HEK293 (cell line): ENCODE measurements at regions of chr6 and their contacts with region 1.

Region 1: DNA sequence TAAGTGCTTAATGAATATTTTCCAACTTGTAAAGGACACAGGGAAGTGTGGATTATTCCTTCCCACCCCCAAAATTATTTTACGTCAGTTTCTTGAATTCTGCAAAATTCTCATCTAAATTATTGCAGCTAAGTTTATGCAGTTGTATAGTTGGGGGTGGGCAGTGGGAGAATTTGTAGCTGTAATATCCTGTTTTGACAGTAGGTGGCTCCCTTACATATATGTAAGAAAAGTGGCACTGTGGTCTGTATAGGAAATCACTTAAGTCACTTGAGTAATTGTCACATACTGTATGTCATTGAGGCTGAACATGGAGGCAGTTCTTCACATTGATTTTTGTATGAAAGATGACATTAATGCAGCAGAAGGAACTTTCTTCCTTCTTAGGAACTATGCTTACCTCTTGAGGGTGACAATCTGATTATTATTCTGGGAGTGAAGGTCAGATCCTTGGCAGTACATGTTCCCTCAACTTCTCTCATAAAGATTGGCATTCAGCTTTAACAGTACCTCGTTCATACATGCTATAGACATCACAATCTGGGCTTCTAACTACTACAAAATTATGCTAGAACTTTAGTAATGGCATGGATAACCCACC is 14.7 kb upstream of the CFAP206 start:
- H3K4me3 ChIP-seq: no peak overlapping the region
- H3K27ac ChIP-seq: no peak overlapping the region
- H3K4me1 ChIP-seq: no peaks in the 10 kb centered on the region
- CTCF ChIP-seq: 0 out of 2 replicates have a peak, but pooled peaks have one; percentile 54

Region 2: GRCh38 chr6:87066449-87067333 is 326.4 kb before region 1 on chr6:
- CTCF ChIA-PET with region 1: interaction called, 16 read pairs
- POLR2A ChIA-PET with region 1: no interaction called
- H3K4me3 ChIP-seq: no peak overlapping the region
- H3K27ac ChIP-seq: no peak overlapping the region
- H3K4me1 ChIP-seq: no peaks in the 10 kb centered on the region
- CTCF ChIP-seq: peak; percentile 53; the same call in 1 of the 2 replicates

Region 3: DNA sequence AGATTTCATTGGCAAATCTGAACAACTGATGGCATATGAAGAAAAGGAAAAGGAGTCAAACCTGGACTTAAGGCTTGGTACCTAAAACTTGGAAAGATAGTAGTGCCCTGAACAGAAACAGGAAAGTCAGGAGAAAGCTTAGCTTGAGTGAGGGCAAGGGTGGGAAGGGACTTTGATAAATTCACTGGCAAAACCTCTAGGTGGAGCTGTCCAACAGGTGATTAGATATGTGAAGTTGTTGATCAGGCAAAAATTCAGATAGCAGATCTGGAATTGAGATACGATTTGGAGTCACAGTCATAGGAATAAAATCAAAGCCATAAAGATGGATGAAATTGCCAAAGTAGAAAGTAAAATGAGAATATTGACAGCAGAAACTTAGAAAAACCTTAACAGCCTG is 253.9 kb before region 1 on chr6:
- CTCF ChIA-PET with region 1: interaction called, 23 read pairs
- POLR2A ChIA-PET with region 1: no interaction called
- H3K4me3 ChIP-seq: no peak overlapping the region
- H3K27ac ChIP-seq: no peak overlapping the region
- H3K4me1 ChIP-seq: no peaks in the 10 kb centered on the region
- CTCF ChIP-seq: no peak

Region 4: DNA sequence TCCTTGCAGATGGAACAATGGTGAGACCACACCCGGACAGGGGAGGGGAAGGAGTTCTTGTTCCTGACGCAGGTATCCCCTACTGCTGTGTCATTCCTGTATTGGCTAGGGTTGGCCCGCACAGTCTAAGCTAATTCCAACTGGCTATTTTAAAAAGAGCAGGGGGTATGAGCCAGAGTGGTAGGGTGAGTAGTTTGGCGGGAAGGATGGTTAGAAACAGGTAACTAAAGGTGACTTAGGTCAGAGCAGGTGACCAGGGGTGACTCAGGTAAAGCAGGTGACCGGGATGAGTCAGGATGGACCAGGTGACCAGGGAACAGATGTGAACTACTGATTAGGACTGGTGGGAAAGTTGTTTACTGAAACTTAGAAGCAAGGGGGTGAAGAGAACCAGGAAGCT is 179.8 kb before region 1 on chr6:
- CTCF ChIA-PET with region 1: no interaction called
- POLR2A ChIA-PET with region 1: no interaction called
- H3K4me3 ChIP-seq: no peak overlapping the region
- H3K27ac ChIP-seq: no peak overlapping the region
- H3K4me1 ChIP-seq: peaks cover 4% of the 10 kb centered on the region
- CTCF ChIP-seq: no peak

Region 5: GRCh38 chr6:87277123-87277522 is 116.0 kb before region 1 on chr6:
- CTCF ChIA-PET with region 1: interaction called, 22 read pairs
- POLR2A ChIA-PET with region 1: no interaction called
- H3K4me3 ChIP-seq: no peak overlapping the region
- H3K27ac ChIP-seq: no peak overlapping the region
- H3K4me1 ChIP-seq: no peaks in the 10 kb centered on the region
- CTCF ChIP-seq: peak; percentile 65

Region 6: GRCh38 chr6:87483929-87484328 is 90.8 kb after region 1 on chr6:
- CTCF ChIA-PET with region 1: no interaction called
- POLR2A ChIA-PET with region 1: no interaction called
- H3K4me3 ChIP-seq: no peak overlapping the region
- H3K27ac ChIP-seq: no peak overlapping the region
- H3K4me1 ChIP-seq: no peaks in the 10 kb centered on the region
- CTCF ChIP-seq: peak; percentile 28; the same call in 1 of the 2 replicates

Region 7: DNA sequence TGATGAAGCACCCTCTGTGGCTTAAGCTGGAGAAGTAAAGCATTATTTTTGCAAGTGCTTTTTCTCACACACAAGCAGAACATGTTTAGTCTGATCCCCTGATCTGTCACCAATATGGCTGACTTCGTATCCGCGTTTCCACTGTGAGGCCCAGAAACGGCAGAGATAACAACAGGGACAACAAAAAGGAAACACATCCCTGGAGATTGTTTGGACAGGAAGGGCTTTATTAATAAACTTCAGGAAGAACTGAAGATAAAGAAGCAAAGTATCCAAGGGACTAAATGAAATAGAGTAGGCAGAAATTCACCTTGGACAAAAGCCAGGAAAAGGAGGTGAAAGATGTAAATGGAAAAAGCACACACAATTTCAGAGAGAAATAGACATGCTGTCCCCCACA is 147.4 kb after region 1 on chr6:
- CTCF ChIA-PET with region 1: no interaction called
- POLR2A ChIA-PET with region 1: no interaction called
- H3K4me3 ChIP-seq: no peak overlapping the region
- H3K27ac ChIP-seq: no peak overlapping the region
- H3K4me1 ChIP-seq: no peaks in the 10 kb centered on the region
- CTCF ChIP-seq: no peak